AG04450 (cell line): ENCODE measurements at regions of chr9 and their contacts with region 1.

Region 1: GRCh38 chr9:99140685-99141314 is 35.9 kb downstream of the TGFBR1 start:
- DNase-seq: peak; percentile 34
- H3K4me3 ChIP-seq: no peak overlapping the region
- H3K27ac ChIP-seq: no peak overlapping the region
- H3K27me3 ChIP-seq: no peaks in the 10 kb centered on the region
- CTCF ChIP-seq: peak; percentile 92

Region 2: GRCh38 chr9:98627296-98627695 is 513.5 kb before region 1 on chr9:
- CTCF ChIA-PET with region 1: no interaction called
- POLR2A ChIA-PET with region 1: no interaction called
- DNase-seq: no peak
- H3K4me3 ChIP-seq: no peak overlapping the region
- H3K27ac ChIP-seq: no peak overlapping the region
- H3K27me3 ChIP-seq: peaks cover 17% of the 10 kb centered on the region
- CTCF ChIP-seq: no peak

Region 3: GRCh38 chr9:98848450-98849149 is 292.2 kb before region 1 on chr9:
- CTCF ChIA-PET with region 1: interaction called, 58 read pairs
- POLR2A ChIA-PET with region 1: no interaction called
- DNase-seq: peak; percentile 90
- H3K4me3 ChIP-seq: peak overlapping the region; percentile 11
- H3K27ac ChIP-seq: peak overlapping the region; percentile 32
- H3K27me3 ChIP-seq: peaks cover 15% of the 10 kb centered on the region
- CTCF ChIP-seq: peak; percentile 96

Region 4: GRCh38 chr9:98989036-98990000 is 151.5 kb before region 1 on chr9:
- CTCF ChIA-PET with region 1: interaction called, 14 read pairs
- POLR2A ChIA-PET with region 1: no interaction called
- DNase-seq: peak; percentile 94
- H3K4me3 ChIP-seq: no peak overlapping the region
- H3K27ac ChIP-seq: peak overlapping the region; percentile 78
- H3K27me3 ChIP-seq: peaks cover 8% of the 10 kb centered on the region
- CTCF ChIP-seq: peak; percentile 32

Region 5: DNA sequence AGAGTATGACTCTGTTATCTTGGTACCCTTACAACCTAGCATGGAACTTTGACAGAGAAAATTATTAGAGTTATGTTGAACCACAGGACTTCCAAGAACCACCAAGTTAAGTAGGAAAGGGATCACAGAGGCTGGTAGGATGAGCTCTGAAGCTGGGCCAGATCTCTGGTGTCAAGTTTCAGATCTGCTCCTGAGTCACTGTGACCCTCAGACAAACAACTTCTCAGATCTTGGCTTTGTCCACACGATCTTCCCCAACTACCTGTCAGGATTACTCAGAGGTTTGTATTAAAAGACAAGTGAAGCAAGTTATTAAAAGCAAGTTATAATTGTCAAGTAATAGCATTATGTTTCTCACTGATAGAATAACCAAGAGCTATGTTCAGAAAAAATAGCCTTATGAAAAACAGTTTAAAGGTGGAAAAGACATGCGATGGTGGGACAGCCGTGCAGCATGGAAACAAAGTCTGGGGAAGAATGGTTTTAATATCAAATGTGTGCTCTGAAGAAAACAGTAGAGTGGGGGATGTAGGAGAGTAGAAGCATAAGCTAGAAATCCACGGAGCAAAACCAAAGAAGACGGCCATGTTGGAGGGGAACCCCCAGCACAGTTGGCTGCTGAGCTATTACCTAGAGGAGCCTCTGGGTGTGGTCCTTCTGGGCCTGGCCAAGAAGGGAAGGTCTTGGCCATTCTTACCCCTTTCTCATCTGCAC is 270.4 kb after region 1 on chr9:
- CTCF ChIA-PET with region 1: no interaction called
- POLR2A ChIA-PET with region 1: no interaction called
- DNase-seq: peak; percentile 21
- H3K4me3 ChIP-seq: no peak overlapping the region
- H3K27ac ChIP-seq: no peak overlapping the region
- H3K27me3 ChIP-seq: no peaks in the 10 kb centered on the region
- CTCF ChIP-seq: no peak